ENCODE measurements at regions of chr2 and their contacts with region 1.

Region 1: DNA sequence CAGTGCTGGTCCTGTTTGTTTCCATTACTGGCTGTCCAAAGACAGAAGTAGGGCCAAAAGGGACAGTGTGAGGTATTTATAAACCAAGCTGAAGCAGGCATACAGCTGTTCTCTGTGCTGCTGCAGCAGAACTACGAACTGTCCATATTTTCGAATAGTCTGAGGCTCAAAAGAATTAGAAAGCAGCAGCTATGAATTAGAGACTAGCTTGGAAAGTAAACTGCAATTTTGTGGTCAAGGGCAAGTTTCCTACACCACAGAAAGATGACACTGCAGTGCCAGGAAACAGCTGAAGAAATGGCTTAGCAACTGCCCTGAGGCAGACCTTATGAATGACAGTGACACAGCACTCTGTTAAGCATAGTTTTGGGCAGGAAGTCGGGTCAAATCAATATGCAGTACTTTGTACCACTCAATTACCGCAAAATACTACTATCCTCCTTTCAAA is 125.3 kb downstream of the TMEM131 start:
- DNase-seq: peak; percentile 87
- ATAC-seq: peak; percentile 100
- H3K4me3 ChIP-seq: no peak overlapping the region
- H3K27ac ChIP-seq: peak overlapping the region; percentile 33; the same call in 1 of the 2 replicates
- H3K4me1 ChIP-seq: peaks cover 20% of the 10 kb centered on the region
- H3K27me3 ChIP-seq: no peaks in the 10 kb centered on the region
- CTCF ChIP-seq: peak in 2 of 3 experiments; percentile 13 to 66; a peak in 3 of 6 replicates
- EP300 ChIP-seq: peak in 1 of 2 experiments; percentile 41; a peak in 1 of 4 replicates
- POLR2A ChIP-seq: no peak
- RAD21 ChIP-seq: peak; percentile 64

Region 2: DNA sequence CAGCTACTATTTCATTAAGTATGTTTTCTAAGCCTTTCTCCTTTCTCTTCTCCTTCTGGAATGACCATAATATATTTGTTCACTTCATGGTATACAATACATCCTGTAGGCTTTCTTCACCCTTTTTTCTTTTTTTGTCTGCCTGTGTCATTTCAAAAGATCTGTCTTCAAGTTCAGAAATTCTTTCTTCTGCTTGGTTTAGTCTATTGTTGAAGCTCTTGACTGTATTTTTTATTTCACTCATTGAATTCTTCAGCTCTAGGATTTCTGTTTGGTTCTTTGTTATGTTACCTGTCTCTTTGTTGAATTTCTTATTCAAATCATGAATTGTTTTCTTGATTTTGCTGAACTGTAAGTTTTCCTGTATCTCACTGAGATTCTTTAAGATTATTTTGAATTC is 15.4 kb after region 1 on chr2:
- CTCF ChIA-PET with region 1: no interaction called
- POLR2A ChIA-PET with region 1: no interaction called
- RAD21 ChIA-PET with region 1: interaction called, 4 read pairs
- SMC1A ChIA-PET with region 1: interaction called, 13 read pairs
- in situ Hi-C with region 1: no loop called
- intact Hi-C with region 1: no loop called
- DNase-seq: no peak
- ATAC-seq: no peak
- H3K4me3 ChIP-seq: no peak overlapping the region
- H3K27ac ChIP-seq: no peak overlapping the region
- H3K4me1 ChIP-seq: no peaks in the 10 kb centered on the region; the same call in 1 of the 2 replicates
- H3K27me3 ChIP-seq: no peaks in the 10 kb centered on the region
- CTCF ChIP-seq: no peak
- EP300 ChIP-seq: no peak
- POLR2A ChIP-seq: no peak
- RAD21 ChIP-seq: no peak

Measured in GM12878 (cell line).